Caco-2 (cell line): ENCODE measurements at regions of chr5 and their contacts with region 1.

Region 1: GRCh38 chr5:13695076-13695712 is 249.3 kb downstream of the DNAH5 start:
- DNase-seq: peak; percentile 65 to 73
- H3K4me3 ChIP-seq: peak overlapping the region; percentile 10; the same call in 1 of the 2 replicates
- H3K4me3 Mint-ChIP-seq: peak overlapping the region; percentile 62
- H3K27ac Mint-ChIP-seq: no peak overlapping the region
- H3K4me1 ChIP-seq: peaks cover 17% of the 10 kb centered on the region
- H3K4me1 Mint-ChIP-seq: peaks cover 15% of the 10 kb centered on the region
- H3K27me3 ChIP-seq: no peaks in the 10 kb centered on the region
- H3K27me3 Mint-ChIP-seq: peaks cover 3% of the 10 kb centered on the region
- CTCF ChIP-seq: peak; percentile 49 to 56

Region 2: GRCh38 chr5:13625616-13626198 is 69.5 kb before region 1 on chr5:
- CTCF ChIA-PET with region 1: no interaction called
- POLR2A ChIA-PET with region 1: no interaction called
- intact Hi-C with region 1: loop called (anchors 2 kb)
- DNase-seq: peak in 1 of 2 experiments; percentile 21
- H3K4me3 ChIP-seq: no peak overlapping the region
- H3K4me3 Mint-ChIP-seq: no peak overlapping the region
- H3K27ac Mint-ChIP-seq: peak overlapping the region; percentile 53
- H3K4me1 ChIP-seq: peaks cover 45% of the 10 kb centered on the region
- H3K4me1 Mint-ChIP-seq: peaks cover 38% of the 10 kb centered on the region
- H3K27me3 ChIP-seq: no peaks in the 10 kb centered on the region
- H3K27me3 Mint-ChIP-seq: no peaks in the 10 kb centered on the region
- CTCF ChIP-seq: no peak

Region 3: GRCh38 chr5:13640270-13640669 is 54.9 kb before region 1 on chr5:
- CTCF ChIA-PET with region 1: no interaction called
- POLR2A ChIA-PET with region 1: no interaction called
- intact Hi-C with region 1: no loop called
- DNase-seq: peak; percentile 50 to 54
- H3K4me3 ChIP-seq: no peak overlapping the region
- H3K4me3 Mint-ChIP-seq: no peak overlapping the region
- H3K27ac Mint-ChIP-seq: no peak overlapping the region
- H3K4me1 ChIP-seq: peaks cover 33% of the 10 kb centered on the region
- H3K4me1 Mint-ChIP-seq: peaks cover 25% of the 10 kb centered on the region
- H3K27me3 ChIP-seq: no peaks in the 10 kb centered on the region
- H3K27me3 Mint-ChIP-seq: no peaks in the 10 kb centered on the region
- CTCF ChIP-seq: no peak

Region 4: GRCh38 chr5:13821366-13821765 is 126.2 kb after region 1 on chr5:
- CTCF ChIA-PET with region 1: no interaction called
- POLR2A ChIA-PET with region 1: no interaction called
- intact Hi-C with region 1: no loop called
- DNase-seq: no peak
- H3K4me3 ChIP-seq: no peak overlapping the region
- H3K4me3 Mint-ChIP-seq: no peak overlapping the region
- H3K27ac Mint-ChIP-seq: no peak overlapping the region
- H3K4me1 ChIP-seq: no peaks in the 10 kb centered on the region
- H3K4me1 Mint-ChIP-seq: no peaks in the 10 kb centered on the region
- H3K27me3 ChIP-seq: no peaks in the 10 kb centered on the region
- H3K27me3 Mint-ChIP-seq: peaks cover 3% of the 10 kb centered on the region
- CTCF ChIP-seq: no peak